HepG2 (cell line): ENCODE measurements at regions of chr4 and their contacts with region 1.

Region 1: GRCh38 chr4:134078230-134078914 is 123.2 kb downstream of the PABPC4L start:
- DNase-seq: no peak
- ATAC-seq: no peak
- H3K4me3 ChIP-seq: no peak overlapping the region
- H3K27ac ChIP-seq: no peak overlapping the region
- H3K4me1 ChIP-seq: no peaks in the 10 kb centered on the region
- H3K27me3 ChIP-seq: no peaks in the 10 kb centered on the region; a peak in 1 of 5 replicates
- CTCF ChIP-seq: no peak
- EP300 ChIP-seq: no peak
- POLR2A ChIP-seq: no peak
- RAD21 ChIP-seq: no peak

Region 2: GRCh38 chr4:133154725-133155124 is 923.6 kb before region 1 on chr4:
- CTCF ChIA-PET with region 1: no interaction called
- POLR2A ChIA-PET with region 1: no interaction called
- in situ Hi-C with region 1: no loop called
- intact Hi-C with region 1: loop called (anchors 10 kb)
- DNase-seq: peak; percentile 4
- ATAC-seq: peak; percentile 63
- H3K4me3 ChIP-seq: no peak overlapping the region
- H3K27ac ChIP-seq: no peak overlapping the region
- H3K4me1 ChIP-seq: no peaks in the 10 kb centered on the region
- H3K27me3 ChIP-seq: no peaks in the 10 kb centered on the region; a peak in 2 of 5 replicates
- CTCF ChIP-seq: peak; percentile 40
- EP300 ChIP-seq: no peak
- POLR2A ChIP-seq: no peak
- RAD21 ChIP-seq: no peak

Region 3: DNA sequence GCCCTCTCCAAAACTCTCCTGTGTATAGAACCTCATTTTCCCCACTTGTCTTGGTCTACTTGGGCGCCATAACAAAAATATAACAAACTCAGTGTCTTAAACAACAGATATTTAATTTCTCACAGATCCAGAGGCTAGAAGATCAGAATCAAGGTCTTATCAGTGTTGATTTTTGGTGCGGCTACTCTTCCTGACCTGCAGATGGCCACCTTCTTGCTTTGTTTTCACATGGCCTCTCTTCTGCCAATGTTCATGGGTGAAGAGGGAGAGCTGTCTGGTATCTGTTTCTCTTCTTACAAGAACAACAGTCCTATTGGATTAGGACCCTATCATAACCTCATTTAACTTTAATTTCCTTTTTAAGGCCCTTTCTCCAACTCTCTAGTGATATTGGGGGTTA is 54.1 kb before region 1 on chr4:
- CTCF ChIA-PET with region 1: no interaction called
- POLR2A ChIA-PET with region 1: no interaction called
- in situ Hi-C with region 1: no loop called
- intact Hi-C with region 1: loop called (anchors 1 kb)
- DNase-seq: peak; percentile 43
- ATAC-seq: peak; percentile 86
- H3K4me3 ChIP-seq: no peak overlapping the region
- H3K27ac ChIP-seq: no peak overlapping the region
- H3K4me1 ChIP-seq: no peaks in the 10 kb centered on the region
- H3K27me3 ChIP-seq: no peaks in the 10 kb centered on the region
- CTCF ChIP-seq: peak; percentile 41
- EP300 ChIP-seq: no peak
- POLR2A ChIP-seq: no peak
- RAD21 ChIP-seq: no peak

Region 4: DNA sequence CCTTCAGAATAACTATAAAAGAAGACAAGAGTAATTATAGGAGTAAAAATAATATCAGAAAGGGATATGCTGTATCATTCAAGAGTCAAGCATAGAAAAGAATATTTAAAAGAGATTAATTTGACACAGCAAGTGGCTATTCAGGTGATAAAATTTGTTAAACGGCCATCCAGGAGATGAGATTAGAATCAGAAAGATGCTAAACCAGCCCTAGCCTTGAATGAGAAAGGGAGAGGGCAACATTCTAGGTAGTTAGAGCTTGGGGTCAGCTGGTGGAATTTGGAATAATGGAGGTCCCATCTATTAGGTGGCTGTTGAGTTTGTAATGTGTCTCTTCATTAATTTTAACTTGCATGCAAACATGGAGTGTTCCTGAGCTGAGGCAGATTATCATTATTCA is 473.7 kb after region 1 on chr4:
- CTCF ChIA-PET with region 1: no interaction called
- POLR2A ChIA-PET with region 1: no interaction called
- in situ Hi-C with region 1: no loop called
- intact Hi-C with region 1: no loop called
- DNase-seq: no peak
- ATAC-seq: no peak
- H3K4me3 ChIP-seq: no peak overlapping the region
- H3K27ac ChIP-seq: no peak overlapping the region
- H3K4me1 ChIP-seq: no peaks in the 10 kb centered on the region
- H3K27me3 ChIP-seq: no peaks in the 10 kb centered on the region
- CTCF ChIP-seq: no peak
- EP300 ChIP-seq: no peak
- POLR2A ChIP-seq: no peak
- RAD21 ChIP-seq: no peak